Posterior vena cava (tissue), 2 donors: ENCODE measurements at regions of chr5 and their contacts with region 1.

Region 1: GRCh38 chr5:139251281-139251687 is 42.3 kb upstream of the MATR3 start:
- DNase-seq: no peak

Region 2: DNA sequence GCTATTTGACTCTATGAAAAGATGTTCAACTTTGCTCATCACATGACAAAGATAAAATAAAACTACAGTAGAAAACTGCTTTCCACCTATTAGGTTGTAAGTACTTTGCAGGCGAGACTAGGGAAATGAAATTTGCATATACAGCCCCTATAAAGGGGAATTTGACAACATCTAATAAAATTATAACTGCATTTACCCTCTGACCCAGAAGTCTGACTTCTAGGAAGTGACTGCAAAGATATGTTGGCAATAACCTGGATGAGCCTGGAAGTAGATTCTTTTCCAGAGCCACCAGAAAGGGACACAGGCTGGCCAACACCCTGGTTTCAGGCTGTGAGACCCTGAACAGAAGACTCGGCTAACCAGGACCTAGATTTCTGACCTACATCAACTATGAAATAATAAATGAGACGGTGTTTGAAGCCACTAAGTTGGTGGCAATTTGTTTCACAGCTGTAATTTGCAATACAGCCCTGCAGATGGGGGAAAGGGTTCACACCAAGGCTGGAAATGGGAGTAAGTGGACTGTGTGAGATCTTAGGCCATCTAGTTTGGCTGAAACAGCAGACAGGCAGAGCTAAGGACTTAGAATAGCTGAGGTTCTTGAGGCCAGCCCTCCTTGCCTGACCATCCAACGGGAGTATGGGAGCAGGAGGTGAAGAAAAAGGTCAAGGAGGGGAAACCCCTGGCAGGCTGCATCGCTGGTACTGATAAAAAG is 159.7 kb before region 1 on chr5:
- intact Hi-C with region 1: loop called in 1 of 2 experiments (anchors 5 kb)
- DNase-seq: no peak

Region 3: GRCh38 chr5:139282197-139282557 is 30.9 kb after region 1 on chr5:
- intact Hi-C with region 1: no loop called
- DNase-seq: no peak

Region 4: DNA sequence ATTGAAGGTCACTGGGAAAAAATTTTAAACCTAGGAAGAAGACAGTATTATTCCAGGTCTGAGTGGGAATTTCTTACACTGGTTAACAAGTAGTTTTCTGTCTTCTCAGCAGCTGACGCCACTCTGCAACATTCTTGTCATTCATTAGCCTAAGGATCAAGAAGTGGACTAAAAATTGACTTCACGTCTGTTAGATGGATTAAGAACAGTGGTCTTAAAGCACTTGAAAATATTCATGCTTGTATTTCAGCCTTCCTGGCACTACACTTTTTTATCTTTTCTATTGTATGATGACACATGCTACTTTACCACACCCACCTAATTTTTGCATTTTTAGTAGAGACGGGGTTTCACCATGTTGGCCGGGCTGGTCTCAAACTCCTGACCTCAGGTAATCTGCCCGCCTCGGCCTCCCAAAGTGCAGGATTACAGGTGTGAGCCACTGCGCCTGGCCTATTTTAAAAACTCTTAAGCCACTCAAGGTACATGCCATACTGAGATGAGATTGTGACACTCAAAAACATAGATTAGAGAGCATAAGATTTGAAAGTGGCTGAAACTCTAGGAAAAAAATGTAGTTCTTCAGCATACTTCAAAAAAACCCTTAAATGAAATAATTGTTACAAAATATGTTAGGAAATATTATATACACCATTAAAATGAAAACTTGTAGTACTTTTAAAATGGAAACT is 50.7 kb after region 1 on chr5:
- intact Hi-C with region 1: no loop called
- DNase-seq: no peak

Region 5: DNA sequence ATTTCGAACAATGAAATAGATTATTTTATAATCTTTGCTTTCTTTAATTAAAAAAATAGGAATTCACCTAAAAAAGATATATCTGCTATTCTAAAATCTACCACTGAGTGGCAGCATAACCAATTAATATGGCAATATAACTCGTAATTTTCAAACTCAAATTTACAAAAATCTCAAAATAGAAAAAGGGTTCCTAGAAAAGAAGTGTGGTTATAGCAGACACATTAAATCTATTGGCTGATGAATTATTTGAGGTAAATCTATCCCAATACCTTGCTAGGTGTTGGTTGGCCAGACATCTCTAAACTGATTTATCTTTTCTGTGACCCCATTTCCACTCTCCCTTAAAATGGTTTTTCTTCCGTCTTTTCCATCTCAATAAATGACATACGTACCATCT is 822.0 kb after region 1 on chr5:
- intact Hi-C with region 1: no loop called
- DNase-seq: no peak